GM13977 (cell line): ENCODE measurements at regions of chrX and their contacts with region 1.

Region 1: DNA sequence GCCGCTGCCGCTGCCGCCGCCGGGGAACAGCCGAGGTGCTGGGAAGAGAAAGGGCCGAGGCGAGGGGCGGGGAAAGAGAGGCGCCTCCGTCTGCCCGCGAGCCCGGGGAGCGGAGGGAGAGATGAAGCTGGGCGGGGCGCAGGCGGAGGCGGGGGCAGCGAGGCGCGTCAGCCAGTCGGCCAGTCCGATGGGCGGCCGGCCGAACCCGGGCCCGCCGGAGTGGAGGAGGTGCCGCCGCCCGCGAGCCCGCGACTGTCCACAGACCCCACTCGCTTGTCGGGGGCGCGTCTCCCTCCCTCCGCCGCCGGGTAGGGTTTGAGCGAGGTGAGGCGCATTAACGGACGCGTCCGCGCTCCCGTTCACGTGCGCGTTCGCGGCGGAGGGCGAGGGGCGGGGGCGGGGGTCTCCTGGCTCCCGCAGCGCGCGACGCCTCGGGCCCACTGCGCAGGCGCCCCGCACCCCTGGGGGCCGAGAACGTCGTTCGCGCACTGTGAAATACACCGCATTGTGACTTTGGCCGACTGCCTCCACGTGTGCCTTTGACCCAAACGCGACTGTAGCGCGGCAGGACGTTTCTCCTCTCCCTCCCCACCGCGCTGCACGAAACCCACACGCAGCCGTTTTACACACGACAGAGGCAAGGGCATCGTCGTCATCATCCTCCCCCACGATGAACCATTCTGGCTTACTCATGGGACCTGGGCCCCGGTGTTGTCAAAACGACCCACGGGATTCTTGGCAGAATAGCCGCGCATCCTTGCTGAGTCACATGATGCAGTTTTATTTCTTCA is at the start of gene NUDT11:
- DNase-seq: peak; percentile 50
- CTCF ChIP-seq: no peak

Region 2: GRCh38 chrX:51860679-51861078 is 364.0 kb after region 1 on chrX:
- in situ Hi-C with region 1: loop called (anchors 25 kb)
- DNase-seq: peak; percentile 6
- CTCF ChIP-seq: peak; percentile 58